Adrenal gland (tissue), 19 donors: ENCODE measurements at regions of chr5 and their contacts with region 1.

Region 1: GRCh38 chr5:172770675-172771438 is at the start of gene DUSP1:
- DNase-seq: peak; percentile 99 to 100 (median 100)
- H3K4me3 ChIP-seq: peak within 1 kb of the TSS; percentile 18 to 90 (median 54)
- H3K27ac ChIP-seq: peak within 1 kb of the TSS; percentile 99 to 100 (median 99)
- H3K4me1 ChIP-seq: peaks cover 47 to 74% of the 10 kb centered on the region in 2 donors
- H3K27me3 ChIP-seq: no peaks in the 10 kb centered on the region
- CTCF ChIP-seq: peak in 4 of 6 experiments; percentile 14 to 74 (median 40)
- POLR2A ChIP-seq: peak in 1 of 2 donors; percentile 100
- total RNA-seq, gene DUSP1: 60.5 to 603 (median 322) TPM

Region 2: GRCh38 chr5:172868924-172869591 is 98.2 kb after region 1 on chr5:
- intact Hi-C with region 1: loop called in 1 of 2 experiments (anchors 5 kb)
- DNase-seq: peak; percentile 84 to 95 (median 94)
- H3K4me3 ChIP-seq: no peak overlapping the region
- H3K27ac ChIP-seq: peak overlapping the region; percentile 86 to 99 (median 91)
- H3K4me1 ChIP-seq: peaks cover 77 to 96% of the 10 kb centered on the region in 2 donors
- H3K27me3 ChIP-seq: no peaks in the 10 kb centered on the region
- CTCF ChIP-seq: peak in 5 of 6 experiments; percentile 27 to 41 (median 30)
- POLR2A ChIP-seq: peak; percentile 63 to 85

Region 3: DNA sequence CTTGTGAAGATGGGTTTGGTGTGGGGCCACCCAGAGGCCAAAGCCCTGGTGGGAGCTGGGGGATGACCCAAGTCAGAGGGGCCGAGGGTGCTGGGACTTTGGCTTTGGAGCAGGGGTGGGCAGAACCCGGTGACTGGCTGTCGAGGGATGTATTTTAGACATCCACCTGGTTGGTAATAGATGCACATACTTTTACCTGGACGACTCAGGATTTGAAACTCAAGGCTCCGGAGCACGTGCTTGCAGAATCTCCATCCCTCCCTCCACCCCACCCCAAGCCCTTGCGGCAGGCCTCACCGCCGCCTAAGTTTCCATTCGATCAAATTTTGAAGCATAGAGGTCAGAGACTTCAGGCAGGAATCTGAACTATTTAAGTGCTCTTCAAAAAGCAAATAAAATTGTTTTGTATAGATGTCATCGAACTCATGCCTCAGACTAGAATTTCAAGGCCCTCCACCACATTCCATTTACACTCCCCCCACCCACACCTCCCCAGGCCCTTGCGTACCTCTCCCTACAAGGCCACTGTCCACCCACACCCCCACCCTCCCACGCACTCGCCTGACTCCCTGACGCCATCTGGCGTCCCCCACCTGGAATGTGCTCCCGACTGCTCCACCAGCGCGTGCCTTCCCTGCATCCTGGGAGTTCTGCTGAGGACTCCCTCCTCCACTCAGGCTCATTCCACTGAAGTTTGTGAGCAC is 131.8 kb after region 1 on chr5:
- intact Hi-C with region 1: loop called in 1 of 2 experiments (anchors 10 kb)
- DNase-seq: peak; percentile 91 to 97 (median 95)
- H3K4me3 ChIP-seq: no peak overlapping the region
- H3K27ac ChIP-seq: peak overlapping the region; percentile 91 to 97 (median 94)
- H3K4me1 ChIP-seq: peaks cover 42 to 63% of the 10 kb centered on the region in 2 donors
- H3K27me3 ChIP-seq: no peaks in the 10 kb centered on the region
- CTCF ChIP-seq: peak; percentile 14 to 63 (median 44)
- POLR2A ChIP-seq: peak; percentile 13 to 44